ENCODE measurements at regions of chr15 and their contacts with region 1.

Region 1: DNA sequence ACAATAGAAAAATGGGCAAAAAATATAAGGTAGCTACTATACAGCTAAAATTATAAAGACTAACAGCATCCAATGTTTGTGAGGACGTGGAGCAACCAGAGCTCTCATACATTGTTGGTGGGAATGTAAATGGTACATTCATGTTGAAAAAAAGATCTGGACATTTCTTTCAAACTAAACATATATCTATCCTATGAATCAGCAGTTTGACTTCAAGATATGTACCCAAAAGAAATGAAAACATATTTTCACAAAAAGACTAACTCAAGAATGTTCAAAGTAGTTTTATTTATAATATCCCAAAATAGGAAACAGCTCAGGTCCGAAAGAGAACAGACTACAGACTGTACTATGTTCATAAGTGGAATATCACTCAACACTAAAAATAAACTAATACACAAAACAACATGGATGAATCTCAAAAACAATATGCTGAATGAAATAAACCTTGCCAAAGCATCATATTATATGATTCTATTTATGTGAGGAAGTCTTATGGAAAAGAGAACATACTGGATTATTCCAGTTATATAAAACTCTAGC is 8.8 kb upstream of the TTBK2 start:
- DNase-seq: no peak
- H3K4me3 Mint-ChIP-seq: no peak overlapping the region
- H3K27ac Mint-ChIP-seq: no peak overlapping the region
- H3K4me1 Mint-ChIP-seq: no peaks in the 10 kb centered on the region
- H3K27me3 Mint-ChIP-seq: no peaks in the 10 kb centered on the region

Region 2: GRCh38 chr15:42704492-42704926 is 224.9 kb before region 1 on chr15:
- CTCF ChIA-PET with region 1: interaction called, 57 read pairs
- POLR2A ChIA-PET with region 1: no interaction called
- intact Hi-C with region 1: loop called (anchors 1 kb)
- DNase-seq: peak; percentile 73
- H3K4me3 Mint-ChIP-seq: no peak overlapping the region
- H3K27ac Mint-ChIP-seq: no peak overlapping the region
- H3K4me1 Mint-ChIP-seq: no peaks in the 10 kb centered on the region
- H3K27me3 Mint-ChIP-seq: no peaks in the 10 kb centered on the region

Region 3: DNA sequence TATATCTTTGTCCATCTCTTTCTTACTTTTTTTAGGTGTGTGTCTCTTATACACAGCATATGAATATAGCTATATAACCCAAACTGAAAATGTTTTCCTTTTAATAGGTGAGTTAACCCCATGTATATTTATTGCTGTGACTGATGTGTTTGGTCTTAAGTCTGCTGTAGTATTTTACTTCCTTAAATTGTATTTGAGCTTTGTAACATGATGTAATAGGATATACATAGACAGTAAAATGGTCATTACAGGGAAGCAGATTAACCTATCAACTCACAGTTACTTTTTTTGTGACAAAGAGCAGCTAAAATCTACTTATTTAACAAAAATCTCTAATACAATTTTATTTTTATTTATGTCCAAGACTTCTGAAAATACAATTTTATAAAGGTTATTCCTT is 140.7 kb before region 1 on chr15:
- CTCF ChIA-PET with region 1: no interaction called
- POLR2A ChIA-PET with region 1: no interaction called
- intact Hi-C with region 1: no loop called
- DNase-seq: no peak
- H3K4me3 Mint-ChIP-seq: no peak overlapping the region
- H3K27ac Mint-ChIP-seq: no peak overlapping the region
- H3K4me1 Mint-ChIP-seq: no peaks in the 10 kb centered on the region
- H3K27me3 Mint-ChIP-seq: no peaks in the 10 kb centered on the region

Region 4: DNA sequence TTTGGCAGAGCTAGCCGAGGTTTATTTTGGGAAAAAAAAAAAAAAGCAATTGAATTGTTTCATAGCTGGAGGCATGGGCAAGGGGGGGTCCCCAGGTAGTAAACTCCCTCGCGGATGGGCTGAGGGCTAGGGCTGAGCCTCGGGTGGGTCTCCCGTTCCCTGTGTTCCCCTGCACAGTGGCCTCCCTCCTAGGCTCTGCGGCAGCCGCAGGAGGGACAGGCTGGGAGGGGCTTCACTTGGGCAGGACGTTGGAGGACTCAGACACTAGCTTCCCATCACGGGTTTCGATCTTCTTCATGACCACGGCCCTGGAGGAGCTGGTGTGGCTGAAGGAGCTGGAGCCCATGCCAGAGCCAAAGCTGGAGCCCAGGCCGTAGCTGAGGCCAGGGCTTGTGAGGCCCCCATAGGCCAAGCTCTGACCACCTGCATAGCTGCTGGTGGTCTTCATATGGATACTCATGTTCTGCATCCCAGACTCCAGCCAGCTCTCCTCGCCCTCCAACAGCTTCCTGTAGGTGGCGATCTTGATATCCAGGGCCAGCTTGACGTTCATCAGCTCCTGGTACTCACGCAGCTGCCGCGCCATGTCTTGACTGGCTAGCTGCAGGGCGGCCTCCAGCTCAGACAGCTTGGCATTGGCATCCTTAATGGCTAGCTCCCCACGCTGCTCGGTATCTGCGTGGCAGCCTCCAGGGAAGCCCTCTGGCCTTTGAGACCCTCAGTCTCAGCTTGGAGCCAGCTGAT is 128.5 kb before region 1 on chr15:
- CTCF ChIA-PET with region 1: interaction called, 22 read pairs
- POLR2A ChIA-PET with region 1: no interaction called
- intact Hi-C with region 1: loop called (anchors 5 kb)
- DNase-seq: peak; percentile 12
- H3K4me3 Mint-ChIP-seq: no peak overlapping the region
- H3K27ac Mint-ChIP-seq: no peak overlapping the region
- H3K4me1 Mint-ChIP-seq: no peaks in the 10 kb centered on the region
- H3K27me3 Mint-ChIP-seq: no peaks in the 10 kb centered on the region

Region 5: DNA sequence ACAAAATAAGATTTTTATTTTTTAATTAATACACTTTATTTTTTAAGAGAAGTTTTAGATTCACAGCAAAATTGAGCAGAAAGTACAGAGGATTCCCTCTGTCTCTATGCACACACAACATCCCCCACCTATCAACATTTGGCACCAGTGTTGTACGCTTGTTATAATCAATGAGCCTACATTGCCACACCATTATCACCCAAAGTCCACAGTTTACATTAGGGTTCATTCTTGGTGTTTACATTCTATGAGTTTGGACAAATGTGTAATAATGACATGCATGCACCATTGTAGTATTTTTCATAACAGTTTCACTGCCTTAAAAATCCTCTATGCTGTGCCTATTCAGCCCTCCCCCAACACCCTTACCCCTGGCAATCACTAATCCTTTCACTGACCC is 42.5 kb after region 1 on chr15:
- CTCF ChIA-PET with region 1: no interaction called
- POLR2A ChIA-PET with region 1: no interaction called
- intact Hi-C with region 1: no loop called
- DNase-seq: no peak
- H3K4me3 Mint-ChIP-seq: no peak overlapping the region
- H3K27ac Mint-ChIP-seq: no peak overlapping the region
- H3K4me1 Mint-ChIP-seq: no peaks in the 10 kb centered on the region
- H3K27me3 Mint-ChIP-seq: no peaks in the 10 kb centered on the region

Measured in activated CD4-positive, alpha-beta memory T cell treated with anti-CD3 and anti-CD28 coated beads for 36 hours (primary cell).